ENCODE measurements at regions of chr2 and their contacts with region 1.

Region 1: DNA sequence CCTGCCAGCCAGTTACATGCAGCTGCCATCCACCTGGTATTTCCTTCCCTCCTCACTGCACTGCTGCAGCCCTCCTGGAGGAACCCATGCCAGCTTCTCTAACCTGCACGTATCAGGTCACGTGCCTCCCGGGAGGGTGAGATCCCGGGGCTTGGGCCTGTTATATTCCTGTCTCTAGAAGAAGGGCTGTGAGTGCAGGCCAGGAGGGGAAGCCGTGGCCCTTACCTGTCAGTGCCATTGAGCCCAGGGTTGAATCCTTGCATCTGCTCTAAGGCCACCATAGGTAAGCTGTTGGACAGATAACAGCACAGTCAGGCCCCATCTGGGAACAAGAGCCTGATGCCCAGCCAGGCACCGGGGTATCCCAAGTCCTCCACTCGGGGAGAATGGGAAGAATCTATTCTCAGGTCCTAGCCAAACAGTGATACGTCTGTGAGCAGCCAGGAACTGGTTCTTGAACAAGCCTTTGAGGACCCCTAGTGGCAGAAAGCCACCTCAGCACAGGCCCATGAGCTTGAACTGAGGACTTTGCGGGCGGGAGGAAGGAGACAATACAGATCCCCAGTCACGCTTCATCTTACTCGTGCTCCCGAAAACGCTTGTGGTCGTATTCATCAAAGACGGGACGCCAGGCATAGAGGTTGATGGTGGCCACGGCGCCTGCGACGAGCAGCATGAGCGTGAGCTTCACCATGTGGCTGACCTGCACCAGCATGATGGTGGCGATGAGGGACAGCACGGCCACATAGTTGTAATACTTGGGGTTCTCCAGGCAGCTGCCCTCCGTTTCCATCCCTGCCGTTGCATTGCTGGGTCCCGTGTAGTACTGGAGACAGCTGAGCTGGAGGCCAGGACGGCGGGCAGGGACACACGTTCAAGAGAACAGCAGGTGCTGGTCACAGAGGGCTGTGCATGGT is 34.4 kb downstream of the CENPO start:
- DNase-seq: peak; percentile 92
- H3K4me3 Mint-ChIP-seq: no peak overlapping the region
- H3K27ac Mint-ChIP-seq: peak overlapping the region; percentile 93
- H3K4me1 Mint-ChIP-seq: peaks cover 23% of the 10 kb centered on the region
- H3K27me3 Mint-ChIP-seq: no peaks in the 10 kb centered on the region

Region 2: DNA sequence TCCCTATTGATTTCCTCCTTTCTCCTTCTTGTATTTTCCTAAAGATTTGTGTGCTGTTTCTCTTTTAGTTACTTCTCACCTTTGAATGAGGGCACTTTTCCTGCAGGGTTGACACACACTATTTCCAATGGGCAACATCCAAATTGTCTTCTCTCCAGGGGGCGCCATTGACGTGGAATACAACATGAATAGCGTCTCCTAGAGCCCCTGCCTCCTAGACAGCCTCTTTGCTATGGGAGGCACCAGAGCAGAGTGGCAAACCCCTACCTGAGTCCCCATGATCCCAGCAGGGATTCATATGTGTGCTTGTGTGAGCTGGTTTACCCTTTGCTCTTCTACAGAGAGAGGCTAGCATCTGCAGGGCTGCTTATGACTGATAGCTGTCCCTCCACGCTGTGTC is 405.9 kb before region 1 on chr2:
- intact Hi-C with region 1: loop called (anchors 1 kb)
- DNase-seq: peak; percentile 83
- H3K4me3 Mint-ChIP-seq: no peak overlapping the region
- H3K27ac Mint-ChIP-seq: no peak overlapping the region
- H3K4me1 Mint-ChIP-seq: no peaks in the 10 kb centered on the region
- H3K27me3 Mint-ChIP-seq: peaks cover 14% of the 10 kb centered on the region

Region 3: GRCh38 chr2:24577481-24577880 is 250.1 kb before region 1 on chr2:
- intact Hi-C with region 1: loop called (anchors 2 kb)
- DNase-seq: peak; percentile 64
- H3K4me3 Mint-ChIP-seq: peak overlapping the region; percentile 34
- H3K27ac Mint-ChIP-seq: peak overlapping the region; percentile 49
- H3K4me1 Mint-ChIP-seq: peaks cover 66% of the 10 kb centered on the region
- H3K27me3 Mint-ChIP-seq: no peaks in the 10 kb centered on the region

Region 4: GRCh38 chr2:24721470-24721869 is 106.1 kb before region 1 on chr2:
- intact Hi-C with region 1: no loop called
- DNase-seq: no peak
- H3K4me3 Mint-ChIP-seq: no peak overlapping the region
- H3K27ac Mint-ChIP-seq: no peak overlapping the region
- H3K4me1 Mint-ChIP-seq: peaks cover 5% of the 10 kb centered on the region
- H3K27me3 Mint-ChIP-seq: no peaks in the 10 kb centered on the region

Region 5: GRCh38 chr2:24792874-24793760 is 34.5 kb before region 1 on chr2 and contains the starts of genes CENPO and PTRHD1:
- intact Hi-C with region 1: loop called (anchors 2 kb)
- DNase-seq: peak; percentile 98
- H3K4me3 Mint-ChIP-seq: peak within 1 kb of the TSS; percentile 98
- H3K27ac Mint-ChIP-seq: peak within 1 kb of the TSS; percentile 99
- H3K4me1 Mint-ChIP-seq: peaks cover 37% of the 10 kb centered on the region
- H3K27me3 Mint-ChIP-seq: peaks cover 2% of the 10 kb centered on the region
- total RNA-seq, gene CENPO: 44.0 and 45.9 TPM in 2 replicates
- total RNA-seq, gene PTRHD1: 21.7 and 22.2 TPM in 2 replicates

Region 6: DNA sequence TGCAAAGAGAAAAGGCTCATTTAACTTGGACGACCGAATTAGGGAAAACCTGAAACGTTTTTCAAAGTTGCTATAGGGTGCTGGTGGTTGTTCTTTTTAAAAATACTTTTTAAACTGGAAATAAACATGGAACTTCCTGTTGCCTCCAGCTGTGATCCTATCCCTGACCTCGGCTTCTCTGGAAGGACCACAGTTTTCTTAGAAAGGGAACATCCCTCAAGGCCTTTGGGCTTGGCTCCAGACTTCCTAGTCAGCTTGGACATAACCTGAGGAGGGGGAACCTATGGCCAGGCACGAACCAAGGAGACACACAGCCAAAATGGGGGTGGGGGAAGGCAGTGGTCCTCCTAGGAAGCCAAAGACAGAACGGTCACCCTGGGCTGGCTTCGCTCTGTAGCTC is 23.4 kb after region 1 on chr2:
- intact Hi-C with region 1: no loop called
- DNase-seq: no peak
- H3K4me3 Mint-ChIP-seq: no peak overlapping the region
- H3K27ac Mint-ChIP-seq: no peak overlapping the region
- H3K4me1 Mint-ChIP-seq: peaks cover 2% of the 10 kb centered on the region
- H3K27me3 Mint-ChIP-seq: no peaks in the 10 kb centered on the region

Region 7: GRCh38 chr2:24971536-24972314 is 144.1 kb after region 1 on chr2 and contains the start of gene DNAJC27:
- intact Hi-C with region 1: loop called (anchors 5 kb)
- DNase-seq: peak; percentile 99
- H3K4me3 Mint-ChIP-seq: peak within 1 kb of the TSS; percentile 96
- H3K27ac Mint-ChIP-seq: peak within 1 kb of the TSS; percentile 100
- H3K4me1 Mint-ChIP-seq: peaks cover 13% of the 10 kb centered on the region
- H3K27me3 Mint-ChIP-seq: no peaks in the 10 kb centered on the region
- total RNA-seq, gene DNAJC27: 6.9 and 7.0 TPM in 2 replicates